Dorsolateral prefrontal cortex (tissue), 120 donors: ENCODE measurements at regions of chr17 and their contacts with region 1.

Region 1: DNA sequence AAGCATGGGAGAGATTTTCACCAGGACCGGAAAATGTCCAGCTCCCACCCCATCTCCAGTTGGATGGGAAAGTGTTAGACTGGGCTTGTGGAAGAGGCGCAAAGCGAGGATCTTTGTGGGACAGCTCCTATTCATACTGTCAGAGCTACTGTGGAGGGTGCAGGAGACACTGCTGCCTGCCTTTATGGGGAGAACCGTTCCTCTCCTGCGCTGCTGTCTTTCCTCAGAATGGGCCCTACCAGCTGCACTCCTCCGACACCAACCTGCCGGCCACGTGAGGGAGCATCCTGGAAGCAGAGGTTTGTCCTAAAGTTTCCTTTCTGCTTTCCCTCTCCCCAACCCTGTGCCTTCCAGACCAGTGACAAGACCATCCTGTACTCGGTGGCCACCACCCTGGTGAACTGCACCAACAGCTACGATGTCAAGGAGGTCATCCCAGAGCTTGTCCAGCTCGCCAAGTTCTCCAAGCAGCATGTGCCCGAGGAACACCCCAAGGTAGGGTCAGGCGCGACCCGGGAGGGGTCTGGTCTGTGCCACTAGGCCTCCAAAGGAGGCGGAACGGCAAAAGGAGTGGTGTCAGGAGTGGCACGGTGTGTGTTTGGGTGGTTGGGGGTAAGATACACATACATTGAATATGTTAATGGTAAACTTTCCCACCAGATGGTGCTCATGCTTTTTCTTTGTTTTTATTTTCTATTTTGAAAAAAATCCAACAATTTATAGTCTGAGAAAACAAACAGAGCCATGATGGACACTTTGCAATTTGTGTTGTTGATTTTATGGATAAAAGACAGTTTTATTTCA is 23.0 kb downstream of the SLC35G3 start:
- DNase-seq: no peak
- H3K4me3 ChIP-seq: no peak overlapping the region
- H3K27ac ChIP-seq: no peak overlapping the region
- H3K27me3 ChIP-seq: peaks cover 0 to 5% (median 0%) of the 10 kb centered on the region in 45 donors
- CTCF ChIP-seq: peak in 35 of 56 donors; percentile 12 to 64 (median 28)

Region 2: GRCh38 chr17:35141681-35142466 is 29.3 kb before region 1 on chr17 and contains the start of gene NLE1:
- intact Hi-C with region 1: no loop called
- DNase-seq: peak; percentile 69 to 89 (median 79)
- H3K4me3 ChIP-seq: peak within 1 kb of the TSS; percentile 57 to 99 (median 91)
- H3K27ac ChIP-seq: peak within 1 kb of the TSS in 9 of 59 donors; percentile 14 to 80 (median 57)
- H3K27me3 ChIP-seq: no peaks in the 10 kb centered on the region
- CTCF ChIP-seq: peak; percentile 75 to 98 (median 94)
- total RNA-seq, gene NLE1: 8.0 to 21.0 (median 15.2) TPM

Region 3: GRCh38 chr17:35519439-35519838 is 348.3 kb after region 1 on chr17:
- intact Hi-C with region 1: loop called in 1 of 2 experiments (anchors 5 kb)
- DNase-seq: no peak
- H3K4me3 ChIP-seq: no peak overlapping the region
- H3K27ac ChIP-seq: no peak overlapping the region
- H3K27me3 ChIP-seq: peaks cover 0 to 92% (median 38%) of the 10 kb centered on the region in 45 donors
- CTCF ChIP-seq: no peak

Region 4: DNA sequence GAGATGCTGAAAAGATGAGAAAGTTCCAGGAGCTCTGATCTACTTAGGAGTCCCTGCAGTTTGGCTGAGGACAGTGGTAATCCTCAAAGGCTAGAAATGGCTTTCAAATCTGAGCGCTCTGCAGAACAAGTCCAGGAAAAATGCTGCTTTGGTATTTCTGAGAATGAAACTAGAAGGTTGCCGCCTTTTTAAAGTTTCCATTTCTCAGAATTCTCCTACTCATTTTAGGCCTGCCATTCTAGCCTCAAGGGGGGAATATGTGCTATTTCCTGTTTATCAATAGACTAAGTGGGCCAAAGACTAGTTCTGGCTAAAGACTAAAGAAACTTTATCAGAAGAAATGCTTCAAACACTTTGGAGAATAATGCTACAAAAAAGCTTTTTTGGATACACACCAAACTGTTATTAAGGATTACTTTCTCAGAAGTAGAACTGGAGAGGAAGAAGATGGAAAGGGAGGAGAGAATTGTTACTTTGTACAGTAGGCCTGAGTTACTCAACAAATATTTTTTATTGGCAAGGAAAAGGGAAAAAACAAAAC is 366.5 kb after region 1 on chr17 and contains the start of gene SLFN12L:
- intact Hi-C with region 1: loop called in 1 of 2 experiments (anchors 10 kb)
- DNase-seq: no peak
- H3K4me3 ChIP-seq: peak within 1 kb of the TSS in 10 of 59 donors; percentile 0 to 40 (median 16)
- H3K27ac ChIP-seq: peak within 1 kb of the TSS in 13 of 59 donors; percentile 0 to 42 (median 16)
- H3K27me3 ChIP-seq: peaks cover 0 to 7% (median 0%) of the 10 kb centered on the region in 45 donors
- CTCF ChIP-seq: no peak
- total RNA-seq, gene SLFN12L: 0.19 to 3.9 (median 0.75) TPM in 109 of 120 experiments, not detected in the others